Adrenal gland (tissue), 19 donors: ENCODE measurements at regions of chr19 and their contacts with region 1.

Region 1: GRCh38 chr19:42596391-42597072 is 1.8 kb upstream of the CEACAM8 start:
- DNase-seq: peak; percentile 19 to 66 (median 45)
- H3K4me3 ChIP-seq: no peak overlapping the region
- H3K27ac ChIP-seq: no peak overlapping the region
- H3K4me1 ChIP-seq: no peaks in the 10 kb centered on the region
- H3K27me3 ChIP-seq: no peaks in the 10 kb centered on the region
- CTCF ChIP-seq: peak; percentile 82 to 95 (median 88)
- POLR2A ChIP-seq: no peak

Region 2: GRCh38 chr19:42330241-42330711 is 266.3 kb before region 1 on chr19:
- intact Hi-C with region 1: no loop called
- DNase-seq: peak in 1 of 7 donors; percentile 22
- H3K4me3 ChIP-seq: no peak overlapping the region
- H3K27ac ChIP-seq: no peak overlapping the region
- H3K4me1 ChIP-seq: peaks cover 10 to 35% of the 10 kb centered on the region in 2 donors
- H3K27me3 ChIP-seq: no peaks in the 10 kb centered on the region
- CTCF ChIP-seq: no peak
- POLR2A ChIP-seq: no peak

Region 3: DNA sequence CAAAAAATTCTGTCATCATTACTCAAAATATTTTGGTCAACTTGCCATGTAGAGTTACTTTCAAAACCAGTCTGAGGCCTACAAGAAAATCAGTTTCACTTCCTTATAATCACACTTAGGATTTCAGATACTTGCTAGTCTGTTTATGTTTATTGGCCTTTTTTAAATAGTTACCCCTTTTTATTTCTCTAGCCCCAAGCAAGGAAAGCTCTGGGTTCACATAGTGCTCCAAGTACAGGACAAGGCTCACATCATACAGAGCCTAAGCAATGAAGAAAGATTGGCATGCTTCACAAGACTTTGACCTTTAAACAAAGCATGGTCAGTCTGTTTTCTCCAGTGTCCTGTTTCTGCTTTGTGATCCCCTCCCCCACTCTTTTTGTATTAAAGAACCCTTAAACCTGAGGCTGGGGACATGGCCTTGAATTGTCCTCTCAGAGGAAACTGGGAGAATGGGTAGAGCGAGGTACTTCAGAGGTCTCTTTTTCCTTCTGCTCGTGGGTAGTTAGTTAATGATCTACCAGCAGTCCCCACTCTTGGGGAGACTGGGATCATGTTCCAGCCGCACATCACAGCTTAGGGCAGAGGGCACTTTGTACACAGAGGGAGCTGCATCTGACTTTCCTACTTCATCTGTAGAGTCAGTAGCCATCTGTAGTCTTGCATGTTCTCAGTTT is 98.9 kb before region 1 on chr19:
- intact Hi-C with region 1: no loop called
- DNase-seq: no peak
- H3K4me3 ChIP-seq: no peak overlapping the region
- H3K27ac ChIP-seq: peak overlapping the region in 2 of 5 donors; percentile 50 to 54
- H3K4me1 ChIP-seq: peaks cover 0 to 28% of the 10 kb centered on the region in 2 donors
- H3K27me3 ChIP-seq: no peaks in the 10 kb centered on the region
- CTCF ChIP-seq: no peak
- POLR2A ChIP-seq: no peak

Region 4: DNA sequence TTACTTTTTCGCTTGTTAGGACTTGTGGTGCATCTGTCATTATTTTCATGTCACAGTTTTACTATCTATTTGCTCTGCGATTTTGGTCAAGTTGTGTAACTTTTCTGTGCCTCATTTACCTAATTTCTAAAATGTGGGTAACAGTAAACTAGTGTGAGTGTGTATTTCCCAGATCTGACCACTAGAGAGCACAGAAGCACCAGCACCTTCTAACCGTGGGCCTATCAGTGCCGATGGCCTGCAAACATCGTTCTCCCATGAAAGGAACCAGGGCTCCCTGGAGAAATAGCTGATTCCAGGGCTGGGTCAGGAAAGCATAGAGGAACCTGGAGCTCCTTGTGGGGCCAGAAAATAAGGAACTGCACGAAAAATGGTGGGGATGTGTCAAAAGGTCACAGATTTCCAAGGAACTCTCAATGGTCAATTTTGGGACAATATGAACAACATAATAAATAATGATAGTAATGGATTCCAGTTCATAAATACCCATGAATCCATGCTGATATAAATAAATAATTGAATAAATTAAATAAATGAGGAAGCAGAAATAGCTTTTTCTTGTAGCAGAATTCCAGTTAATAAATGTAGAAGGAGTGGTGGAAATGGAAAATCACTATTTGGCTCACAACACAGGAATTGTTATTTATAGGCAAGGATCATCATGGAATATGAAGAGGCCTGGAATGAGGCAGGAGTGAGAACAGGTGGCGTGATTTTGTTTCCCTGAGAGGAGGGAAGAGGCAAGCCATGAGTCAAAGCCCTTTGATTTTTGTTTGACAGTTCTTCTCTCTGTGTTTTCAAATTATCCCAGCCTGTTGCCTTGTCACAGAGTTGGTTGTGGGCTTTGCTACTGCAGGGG is 33.0 kb before region 1 on chr19:
- intact Hi-C with region 1: loop called in 1 of 2 experiments (anchors 5 kb)
- DNase-seq: peak in 6 of 7 donors; percentile 52 to 75 (median 62)
- H3K4me3 ChIP-seq: no peak overlapping the region
- H3K27ac ChIP-seq: no peak overlapping the region
- H3K4me1 ChIP-seq: peaks cover 5 to 20% of the 10 kb centered on the region in 2 donors
- H3K27me3 ChIP-seq: no peaks in the 10 kb centered on the region
- CTCF ChIP-seq: peak; percentile 57 to 84 (median 77)
- POLR2A ChIP-seq: no peak